ENCODE measurements at regions of chr4 and their contacts with region 1.

Region 1: DNA sequence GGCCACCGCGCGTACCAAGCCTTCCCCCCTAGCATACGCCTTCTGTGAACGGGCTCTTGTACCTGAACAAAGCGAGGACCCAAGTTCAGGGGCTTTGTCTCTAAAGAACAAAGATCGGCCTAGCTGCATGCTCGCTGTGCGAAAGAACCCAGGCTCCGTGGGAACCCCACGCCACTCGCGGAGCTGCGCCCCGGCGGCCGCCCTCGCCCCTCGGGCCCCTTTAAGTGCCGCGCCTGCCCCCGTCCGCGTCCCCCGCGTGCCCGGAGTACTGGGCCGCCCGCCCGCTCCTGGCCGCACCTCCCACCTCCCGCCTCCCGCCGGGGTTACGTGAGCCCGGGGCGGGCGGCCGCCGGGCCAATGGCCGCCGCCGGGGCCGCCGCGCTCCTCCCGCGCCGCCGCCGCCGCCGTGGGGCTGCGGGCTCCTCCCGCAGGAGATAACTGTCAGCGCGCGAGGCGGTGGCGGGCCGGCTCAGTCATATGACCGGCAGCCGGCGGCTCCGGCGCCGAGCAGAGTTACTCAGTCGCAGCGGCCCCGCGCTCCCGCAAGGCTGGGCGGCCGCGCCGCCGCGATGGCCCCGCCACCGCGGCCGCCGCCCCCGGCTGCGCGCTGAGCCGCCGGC is at the start of gene FNIP2:
- DNase-seq: peak; percentile 75 to 78 (median 76)
- H3K4me3 ChIP-seq: peak within 1 kb of the TSS; percentile 19 to 74
- H3K4me3 Mint-ChIP-seq: peak within 1 kb of the TSS; percentile 96 to 100 (median 98)
- H3K27ac ChIP-seq: peak within 1 kb of the TSS; percentile 55
- H3K27ac Mint-ChIP-seq: peak within 1 kb of the TSS; percentile 90 to 99 (median 97)
- H3K4me1 ChIP-seq: peaks cover 23% of the 10 kb centered on the region
- H3K4me1 Mint-ChIP-seq: peaks cover 21 to 48% (median 35%) of the 10 kb centered on the region in 4 donors
- H3K27me3 ChIP-seq: no peaks in the 10 kb centered on the region
- H3K27me3 Mint-ChIP-seq: no peaks in the 10 kb centered on the region
- total RNA-seq, gene FNIP2: 8.1 to 9.4 TPM

Region 2: DNA sequence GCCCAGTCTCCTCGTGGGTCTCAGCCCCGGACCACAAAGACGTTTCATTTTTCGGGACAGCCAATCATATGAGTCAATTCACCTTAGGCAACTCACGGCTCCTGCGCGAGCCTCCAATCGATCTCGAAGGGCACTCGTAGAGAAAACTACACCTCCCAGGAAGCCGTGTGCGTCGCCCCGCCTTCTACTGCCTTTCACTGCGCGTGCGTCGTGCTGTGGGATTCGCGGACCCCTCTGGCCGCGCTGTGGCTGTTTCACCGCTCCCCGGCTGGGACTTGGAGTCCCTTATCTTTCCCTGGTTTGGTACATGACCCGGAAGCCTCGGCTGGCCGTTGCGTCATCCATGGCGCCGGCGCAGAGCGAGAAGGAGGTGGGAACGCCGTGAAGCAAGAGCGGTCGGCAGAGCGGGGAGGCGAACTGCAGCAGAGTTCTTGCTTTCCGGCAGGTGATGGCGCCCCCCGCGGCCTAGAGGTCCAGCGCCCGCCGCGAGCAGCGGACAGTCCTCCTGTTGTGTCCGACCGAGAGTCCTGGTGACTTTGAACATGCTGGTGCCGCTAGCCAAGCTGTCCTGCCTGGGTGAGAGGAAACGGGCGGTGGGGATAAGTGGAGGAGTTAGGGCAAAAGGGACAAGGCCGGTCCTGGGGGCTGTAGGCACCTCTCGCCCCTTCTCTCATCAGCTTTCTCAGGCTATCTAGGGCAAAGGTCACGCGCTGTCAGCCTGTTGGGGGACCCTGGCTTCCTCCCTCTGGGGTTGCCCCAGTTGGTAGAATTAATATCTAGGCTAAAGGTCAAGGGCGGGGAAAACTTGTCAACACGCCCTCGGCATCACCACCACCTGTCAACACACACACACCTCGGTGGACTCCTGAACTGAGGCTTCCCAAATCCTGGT is 96.5 kb before region 1 on chr4 and contains the start of gene ETFDH:
- CTCF ChIA-PET with region 1: interaction called, 3 read pairs
- POLR2A ChIA-PET with region 1: no interaction called
- intact Hi-C with region 1: loop called (anchors 1 kb)
- DNase-seq: peak; percentile 97 to 99 (median 99)
- H3K4me3 ChIP-seq: peak within 1 kb of the TSS; percentile 53 to 94
- H3K4me3 Mint-ChIP-seq: peak within 1 kb of the TSS; percentile 92 to 98 (median 96)
- H3K27ac ChIP-seq: peak within 1 kb of the TSS; percentile 92
- H3K27ac Mint-ChIP-seq: peak within 1 kb of the TSS; percentile 92 to 99 (median 98)
- H3K4me1 ChIP-seq: peaks cover 22% of the 10 kb centered on the region
- H3K4me1 Mint-ChIP-seq: peaks cover 12 to 34% (median 23%) of the 10 kb centered on the region in 4 donors
- H3K27me3 ChIP-seq: no peaks in the 10 kb centered on the region
- H3K27me3 Mint-ChIP-seq: no peaks in the 10 kb centered on the region
- total RNA-seq, gene ETFDH: 16.0 to 16.6 TPM

Region 3: GRCh38 chr4:158722917-158723793 is 45.5 kb before region 1 on chr4 and contains the start of gene PPID:
- CTCF ChIA-PET with region 1: no interaction called
- POLR2A ChIA-PET with region 1: interaction called, 8 read pairs
- intact Hi-C with region 1: loop called (anchors 1 kb)
- DNase-seq: peak; percentile 77 to 88 (median 79)
- H3K4me3 ChIP-seq: peak within 1 kb of the TSS; percentile 63 to 89
- H3K4me3 Mint-ChIP-seq: peak within 1 kb of the TSS; percentile 95 to 100 (median 98)
- H3K27ac ChIP-seq: peak within 1 kb of the TSS; percentile 93
- H3K27ac Mint-ChIP-seq: peak within 1 kb of the TSS; percentile 95 to 100 (median 99)
- H3K4me1 ChIP-seq: peaks cover 24% of the 10 kb centered on the region
- H3K4me1 Mint-ChIP-seq: peaks cover 25 to 45% (median 35%) of the 10 kb centered on the region in 4 donors
- H3K27me3 ChIP-seq: no peaks in the 10 kb centered on the region
- H3K27me3 Mint-ChIP-seq: peaks cover 0 to 4% of the 10 kb centered on the region in 2 donors
- total RNA-seq, gene PPID: 30.2 to 32.0 TPM

Region 4: DNA sequence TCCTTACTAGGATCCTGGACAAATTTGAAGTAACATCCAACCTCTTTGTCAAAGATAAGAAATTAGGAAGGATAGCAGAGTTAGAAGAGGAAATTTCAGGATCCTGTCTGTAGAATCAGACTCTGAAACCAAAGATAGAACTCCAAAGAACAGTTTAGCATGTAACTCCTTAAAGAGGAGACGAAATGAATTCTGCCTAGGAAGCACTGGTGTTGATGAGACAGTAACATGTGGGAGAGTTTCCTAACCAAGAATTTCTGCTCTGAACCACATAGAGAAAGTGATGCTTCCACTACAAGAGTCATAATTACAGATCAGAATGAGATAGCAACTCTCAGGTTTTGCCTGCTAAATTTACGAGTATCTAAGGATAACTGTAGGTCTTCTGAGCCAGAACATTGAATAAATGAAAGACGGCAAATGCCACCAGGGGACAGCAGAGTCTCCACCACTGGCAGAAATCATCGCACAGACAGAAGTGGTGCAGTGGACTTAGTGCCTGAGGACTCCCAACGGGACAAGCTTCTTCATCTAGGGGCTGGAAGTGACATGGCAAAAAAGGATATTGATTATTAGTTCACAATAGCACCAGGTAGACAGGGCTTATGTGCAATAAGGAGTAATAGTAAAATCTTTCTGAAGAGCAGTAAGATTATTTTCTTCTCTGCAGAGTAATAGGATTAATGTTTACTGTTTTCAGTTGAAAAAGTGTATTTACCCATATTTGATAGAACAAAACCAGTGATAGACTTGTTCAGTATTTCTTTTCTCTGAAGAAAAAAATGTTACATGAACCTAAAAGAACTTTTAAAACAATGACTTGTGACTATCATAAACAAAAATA is 38.7 kb before region 1 on chr4:
- CTCF ChIA-PET with region 1: interaction called, 3 read pairs
- POLR2A ChIA-PET with region 1: no interaction called
- intact Hi-C with region 1: loop called (anchors 2 kb)
- DNase-seq: peak in 4 of 5 donors; percentile 51 to 55 (median 54)
- H3K4me3 ChIP-seq: no peak overlapping the region
- H3K4me3 Mint-ChIP-seq: no peak overlapping the region
- H3K27ac ChIP-seq: no peak overlapping the region
- H3K27ac Mint-ChIP-seq: no peak overlapping the region
- H3K4me1 ChIP-seq: no peaks in the 10 kb centered on the region
- H3K4me1 Mint-ChIP-seq: peaks cover 0 to 1% (median 0%) of the 10 kb centered on the region in 4 donors
- H3K27me3 ChIP-seq: peaks cover 5% of the 10 kb centered on the region
- H3K27me3 Mint-ChIP-seq: peaks cover 21 to 22% of the 10 kb centered on the region in 2 donors

Region 5: DNA sequence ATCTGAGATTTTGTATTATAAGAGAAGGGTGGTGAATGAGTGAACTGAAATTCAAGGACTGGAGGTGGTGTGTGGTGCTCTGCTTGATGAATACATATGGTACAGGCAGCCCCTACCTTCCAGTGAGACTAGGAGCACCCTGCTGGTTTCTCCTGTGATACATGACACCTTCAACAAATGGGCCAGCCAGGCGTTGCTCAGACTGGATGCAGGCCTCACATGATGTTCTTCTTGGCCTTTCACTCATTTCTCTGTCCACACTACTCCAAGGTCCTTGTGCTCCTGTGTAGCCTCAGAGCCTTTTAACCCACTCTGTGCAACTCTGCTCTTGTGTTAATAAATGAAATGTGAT is 67.3 kb after region 1 on chr4:
- CTCF ChIA-PET with region 1: no interaction called
- POLR2A ChIA-PET with region 1: no interaction called
- intact Hi-C with region 1: no loop called
- DNase-seq: no peak
- H3K4me3 ChIP-seq: no peak overlapping the region
- H3K4me3 Mint-ChIP-seq: peak overlapping the region in 1 of 8 donors; percentile 60
- H3K27ac ChIP-seq: no peak overlapping the region
- H3K27ac Mint-ChIP-seq: peak overlapping the region in 2 of 7 donors; percentile 10 to 39
- H3K4me1 ChIP-seq: no peaks in the 10 kb centered on the region
- H3K4me1 Mint-ChIP-seq: no peaks in the 10 kb centered on the region
- H3K27me3 ChIP-seq: no peaks in the 10 kb centered on the region
- H3K27me3 Mint-ChIP-seq: no peaks in the 10 kb centered on the region

Region 6: GRCh38 chr4:159102622-159103383 is 334.1 kb after region 1 on chr4 and contains the start of gene RAPGEF2:
- CTCF ChIA-PET with region 1: no interaction called
- POLR2A ChIA-PET with region 1: no interaction called
- intact Hi-C with region 1: loop called (anchors 2 kb)
- DNase-seq: peak; percentile 88 to 91 (median 90)
- H3K4me3 ChIP-seq: peak within 1 kb of the TSS; percentile 32 to 66
- H3K4me3 Mint-ChIP-seq: peak within 1 kb of the TSS; percentile 86 to 92 (median 90)
- H3K27ac ChIP-seq: peak within 1 kb of the TSS; percentile 65
- H3K27ac Mint-ChIP-seq: peak within 1 kb of the TSS; percentile 89 to 97 (median 94)
- H3K4me1 ChIP-seq: peaks cover 40% of the 10 kb centered on the region
- H3K4me1 Mint-ChIP-seq: peaks cover 31 to 48% (median 40%) of the 10 kb centered on the region in 4 donors
- H3K27me3 ChIP-seq: no peaks in the 10 kb centered on the region
- H3K27me3 Mint-ChIP-seq: no peaks in the 10 kb centered on the region
- total RNA-seq, gene RAPGEF2: 23.1 to 27.9 TPM

Region 7: GRCh38 chr4:159266981-159267868 is 498.6 kb after region 1 on chr4:
- CTCF ChIA-PET with region 1: no interaction called
- POLR2A ChIA-PET with region 1: no interaction called
- intact Hi-C with region 1: no loop called
- DNase-seq: no peak
- H3K4me3 ChIP-seq: no peak overlapping the region
- H3K4me3 Mint-ChIP-seq: no peak overlapping the region
- H3K27ac ChIP-seq: no peak overlapping the region
- H3K27ac Mint-ChIP-seq: no peak overlapping the region
- H3K4me1 ChIP-seq: no peaks in the 10 kb centered on the region
- H3K4me1 Mint-ChIP-seq: peaks cover 4 to 14% (median 8%) of the 10 kb centered on the region in 4 donors
- H3K27me3 ChIP-seq: no peaks in the 10 kb centered on the region
- H3K27me3 Mint-ChIP-seq: no peaks in the 10 kb centered on the region